MCF 10A (cell line): ENCODE measurements at regions of chr1 and their contacts with region 1.

Region 1: GRCh38 chr1:147890177-147890790 is 12.3 kb upstream of the GJA8 start:
- DNase-seq: peak; percentile 85
- H3K4me3 Mint-ChIP-seq: no peak overlapping the region
- H3K27ac Mint-ChIP-seq: peak overlapping the region; percentile 44
- H3K4me1 Mint-ChIP-seq: peaks cover 6% of the 10 kb centered on the region
- H3K27me3 Mint-ChIP-seq: no peaks in the 10 kb centered on the region
- CTCF ChIP-seq: peak; percentile 66

Region 2: GRCh38 chr1:147273409-147274336 is 616.6 kb before region 1 on chr1:
- CTCF ChIA-PET with region 1: interaction called, 7 read pairs
- POLR2A ChIA-PET with region 1: interaction called, 5 read pairs
- intact Hi-C with region 1: loop called (anchors 5 kb)
- DNase-seq: peak; percentile 92
- H3K4me3 Mint-ChIP-seq: peak overlapping the region; percentile 55
- H3K27ac Mint-ChIP-seq: peak overlapping the region; percentile 93
- H3K4me1 Mint-ChIP-seq: peaks cover 14% of the 10 kb centered on the region
- H3K27me3 Mint-ChIP-seq: no peaks in the 10 kb centered on the region
- CTCF ChIP-seq: peak; percentile 37

Region 3: DNA sequence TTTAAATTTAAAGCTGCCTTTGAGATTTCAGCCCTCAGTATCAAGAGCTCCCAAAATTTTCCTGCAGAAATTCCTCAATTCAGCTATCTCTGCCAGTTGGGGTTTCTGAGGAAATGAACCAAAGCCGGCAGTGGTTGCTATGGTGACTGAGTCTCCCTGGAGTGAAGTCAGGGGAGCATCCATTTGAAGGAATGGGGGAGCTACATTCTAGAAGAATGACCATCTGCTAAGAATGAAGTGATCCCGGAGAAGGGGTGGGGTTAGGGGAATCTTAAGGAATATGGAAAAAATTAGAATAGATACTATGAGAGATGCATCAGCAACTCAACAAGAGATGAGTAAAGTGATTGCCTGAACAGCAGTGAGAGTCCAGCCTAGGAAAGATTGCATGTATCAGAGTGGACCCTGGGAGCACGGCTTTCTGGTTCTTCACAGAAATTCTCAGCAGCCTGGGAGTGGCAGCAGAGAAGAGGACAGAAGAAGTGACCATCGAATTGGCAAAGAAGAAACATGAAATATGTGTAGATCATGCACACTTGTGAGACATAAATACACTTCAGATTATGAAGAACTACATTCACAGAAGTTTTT is 553.1 kb before region 1 on chr1:
- CTCF ChIA-PET with region 1: no interaction called
- POLR2A ChIA-PET with region 1: no interaction called
- intact Hi-C with region 1: no loop called
- DNase-seq: no peak
- H3K4me3 Mint-ChIP-seq: no peak overlapping the region
- H3K27ac Mint-ChIP-seq: no peak overlapping the region
- H3K4me1 Mint-ChIP-seq: no peaks in the 10 kb centered on the region
- H3K27me3 Mint-ChIP-seq: peaks cover 54% of the 10 kb centered on the region
- CTCF ChIP-seq: no peak

Region 4: DNA sequence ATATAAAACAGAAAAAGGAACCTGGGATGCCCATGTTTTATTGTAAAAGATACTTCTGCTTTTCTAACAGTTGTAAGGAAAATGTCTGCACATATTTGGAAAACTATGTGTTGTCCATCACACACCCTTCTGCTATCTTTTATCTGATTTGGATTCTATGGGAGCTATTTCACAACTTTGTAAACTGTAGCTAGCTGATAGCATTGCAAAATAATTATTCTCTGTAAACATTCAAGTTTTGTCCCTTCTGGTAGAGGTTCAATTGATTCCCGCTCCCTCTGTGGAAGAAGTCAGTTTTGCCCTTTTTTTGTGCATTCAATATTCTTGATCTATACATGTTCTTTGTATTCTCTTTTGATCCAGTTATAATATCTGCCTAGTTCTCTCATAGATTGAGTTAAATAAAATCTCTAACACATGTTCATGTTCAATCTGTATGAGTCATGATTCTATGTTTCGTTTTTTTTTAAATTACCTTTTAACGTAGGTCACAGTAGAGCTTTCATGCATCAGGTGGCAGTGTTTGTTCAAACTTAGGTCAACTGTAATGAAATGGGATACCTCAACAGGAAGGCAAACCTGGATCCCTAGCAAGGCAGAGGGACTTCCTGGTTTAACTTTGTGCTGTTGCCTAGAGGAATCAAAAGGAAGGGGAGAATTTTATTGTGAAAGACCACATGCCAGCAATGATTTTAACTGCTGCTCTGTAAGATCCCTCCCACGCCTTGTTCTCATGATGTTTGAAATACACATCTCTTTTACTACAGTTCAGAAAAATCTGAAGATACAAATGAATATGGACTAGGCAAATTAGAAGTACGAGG is 375.0 kb before region 1 on chr1:
- CTCF ChIA-PET with region 1: interaction called, 30 read pairs
- POLR2A ChIA-PET with region 1: interaction called, 5 read pairs
- intact Hi-C with region 1: loop called (anchors 1 kb)
- DNase-seq: peak; percentile 84
- H3K4me3 Mint-ChIP-seq: no peak overlapping the region
- H3K27ac Mint-ChIP-seq: no peak overlapping the region
- H3K4me1 Mint-ChIP-seq: peaks cover 7% of the 10 kb centered on the region
- H3K27me3 Mint-ChIP-seq: no peaks in the 10 kb centered on the region
- CTCF ChIP-seq: peak; percentile 27

Region 5: GRCh38 chr1:147635342-147635741 is 254.9 kb before region 1 on chr1:
- CTCF ChIA-PET with region 1: interaction called, 132 read pairs
- POLR2A ChIA-PET with region 1: no interaction called
- intact Hi-C with region 1: loop called (anchors 1 kb)
- DNase-seq: no peak
- H3K4me3 Mint-ChIP-seq: no peak overlapping the region
- H3K27ac Mint-ChIP-seq: no peak overlapping the region
- H3K4me1 Mint-ChIP-seq: no peaks in the 10 kb centered on the region
- H3K27me3 Mint-ChIP-seq: no peaks in the 10 kb centered on the region
- CTCF ChIP-seq: no peak

Region 6: DNA sequence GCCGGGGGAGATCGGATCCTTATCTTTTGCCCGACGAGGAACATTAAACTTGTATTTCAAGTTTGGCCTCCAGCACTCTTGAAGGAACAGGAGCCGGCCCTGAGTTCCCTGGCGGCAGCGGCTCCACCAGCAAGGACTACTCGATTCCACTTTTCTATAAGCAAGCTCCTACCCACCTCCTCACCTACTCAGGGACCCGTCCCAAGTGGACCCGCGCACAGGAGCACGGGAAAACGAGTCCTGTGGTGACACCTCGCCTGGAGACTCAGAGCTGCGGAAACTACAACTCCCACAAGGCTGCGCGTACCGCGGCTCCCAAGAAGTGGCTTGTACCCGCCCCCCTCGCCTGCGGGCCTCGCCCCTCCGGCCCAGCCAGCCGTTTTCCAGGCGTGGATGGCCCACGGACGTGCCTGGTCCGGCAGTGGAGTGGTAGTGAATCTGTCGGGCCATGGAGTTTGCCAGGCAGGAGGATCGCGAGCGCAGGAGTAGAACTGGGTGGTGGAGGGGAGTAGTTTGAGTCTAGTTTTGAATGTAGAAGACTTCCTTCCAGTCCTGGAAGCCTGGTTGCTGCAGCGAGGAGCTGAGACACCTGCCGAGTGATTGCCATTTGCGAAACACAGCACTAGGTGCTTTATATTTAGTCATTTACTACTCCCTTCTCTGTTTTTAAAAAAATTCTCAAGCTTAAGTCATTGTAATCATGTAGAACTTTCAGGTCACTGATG is 219.8 kb before region 1 on chr1 and contains the start of gene ACP6:
- CTCF ChIA-PET with region 1: interaction called, 13 read pairs
- POLR2A ChIA-PET with region 1: interaction called, 10 read pairs
- intact Hi-C with region 1: no loop called
- DNase-seq: peak; percentile 98
- H3K4me3 Mint-ChIP-seq: peak within 1 kb of the TSS; percentile 93
- H3K27ac Mint-ChIP-seq: peak within 1 kb of the TSS; percentile 75
- H3K4me1 Mint-ChIP-seq: peaks cover 18% of the 10 kb centered on the region
- H3K27me3 Mint-ChIP-seq: no peaks in the 10 kb centered on the region
- CTCF ChIP-seq: no peak
- total RNA-seq, gene ACP6: 40.5 and 54.1 TPM in 2 replicates

Region 7: DNA sequence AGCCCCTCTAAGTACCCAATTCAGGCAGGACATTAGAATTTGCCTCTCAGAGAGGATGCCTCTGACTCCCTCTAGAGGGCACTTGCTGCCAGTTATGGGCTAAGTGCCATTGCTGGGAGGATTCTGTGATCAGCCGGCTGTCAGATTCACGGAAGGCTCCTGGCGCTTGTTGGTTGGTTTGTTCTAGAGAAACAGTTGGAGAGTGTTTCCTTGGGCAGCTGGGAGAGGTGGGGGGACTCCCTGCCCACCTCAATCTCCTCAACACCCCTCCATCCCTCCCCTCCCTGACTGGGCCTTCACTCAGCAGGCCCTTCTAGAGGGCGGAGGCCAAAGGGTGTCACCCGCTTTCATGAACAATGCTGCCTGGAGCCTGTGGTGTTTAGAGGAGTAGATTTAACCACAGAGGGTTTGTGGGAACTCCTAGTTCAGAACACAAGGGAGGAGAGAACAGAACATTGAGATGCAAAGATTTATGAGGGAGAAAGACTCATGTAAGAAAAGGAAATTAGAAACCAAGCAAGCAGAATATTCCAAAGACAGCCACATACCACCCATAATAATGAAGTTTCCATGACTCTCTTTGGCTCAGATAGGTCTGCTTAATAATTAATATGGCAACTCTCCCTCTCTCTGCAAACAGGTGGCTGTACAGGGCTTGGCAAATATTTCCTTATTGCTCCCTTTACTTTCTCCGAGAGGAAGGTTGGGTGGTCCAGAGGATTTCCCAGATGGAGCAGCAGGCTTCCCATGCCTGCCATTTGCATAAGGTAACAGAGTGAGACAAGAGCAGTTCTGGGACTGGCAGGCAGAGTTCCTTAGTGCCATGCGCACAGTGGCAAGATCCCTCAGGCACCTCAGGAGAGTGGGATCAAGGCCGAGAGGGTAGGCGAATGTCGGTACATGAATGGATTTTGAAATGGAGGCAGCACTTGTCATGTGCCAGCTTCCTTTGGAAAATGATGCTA is 190.0 kb before region 1 on chr1:
- CTCF ChIA-PET with region 1: interaction called, 98 read pairs
- POLR2A ChIA-PET with region 1: interaction called, 5 read pairs
- intact Hi-C with region 1: loop called (anchors 1 kb)
- DNase-seq: peak; percentile 81
- H3K4me3 Mint-ChIP-seq: no peak overlapping the region
- H3K27ac Mint-ChIP-seq: no peak overlapping the region
- H3K4me1 Mint-ChIP-seq: peaks cover 7% of the 10 kb centered on the region
- H3K27me3 Mint-ChIP-seq: no peaks in the 10 kb centered on the region
- CTCF ChIP-seq: peak; percentile 96

Region 8: GRCh38 chr1:147902183-147902845 is 12.0 kb after region 1 on chr1 and contains the start of gene GJA8:
- CTCF ChIA-PET with region 1: interaction called, 63 read pairs
- POLR2A ChIA-PET with region 1: no interaction called
- intact Hi-C with region 1: no loop called
- DNase-seq: no peak
- H3K4me3 Mint-ChIP-seq: no peak within 1 kb of the TSS
- H3K27ac Mint-ChIP-seq: no peak within 1 kb of the TSS
- H3K4me1 Mint-ChIP-seq: peaks cover 6% of the 10 kb centered on the region
- H3K27me3 Mint-ChIP-seq: peaks cover 15% of the 10 kb centered on the region
- CTCF ChIP-seq: no peak
- total RNA-seq, gene GJA8: not detected in 2 replicates